Mammary epithelial cell (primary cell): ENCODE measurements at regions of chr2 and their contacts with region 1.

Region 1: GRCh38 chr2:29834624-29835023 is 86.8 kb downstream of the ALK start:
- DNase-seq: peak; percentile 38
- H3K4me3 ChIP-seq: no peak overlapping the region
- H3K27ac ChIP-seq: no peak overlapping the region
- H3K4me1 ChIP-seq: no peaks in the 10 kb centered on the region
- H3K27me3 ChIP-seq: peaks cover 4% of the 10 kb centered on the region
- CTCF ChIP-seq: no peak

Region 2: GRCh38 chr2:29309090-29310029 is 525.3 kb before region 1 on chr2:
- CTCF ChIA-PET with region 1: no interaction called
- dilution Hi-C with region 1: no loop called
- in situ Hi-C with region 1: loop called (anchors 10 to 25 kb)
- intact Hi-C with region 1: no loop called
- DNase-seq: peak; percentile 47
- H3K4me3 ChIP-seq: no peak overlapping the region
- H3K27ac ChIP-seq: no peak overlapping the region
- H3K4me1 ChIP-seq: no peaks in the 10 kb centered on the region
- H3K27me3 ChIP-seq: peaks cover 2% of the 10 kb centered on the region
- CTCF ChIP-seq: peak; percentile 89

Region 3: GRCh38 chr2:29783694-29784093 is 50.9 kb before region 1 on chr2:
- CTCF ChIA-PET with region 1: no interaction called
- dilution Hi-C with region 1: loop called (anchors 5 kb)
- in situ Hi-C with region 1: no loop called
- intact Hi-C with region 1: no loop called
- DNase-seq: no peak
- H3K4me3 ChIP-seq: no peak overlapping the region
- H3K27ac ChIP-seq: no peak overlapping the region
- H3K4me1 ChIP-seq: no peaks in the 10 kb centered on the region
- H3K27me3 ChIP-seq: no peaks in the 10 kb centered on the region
- CTCF ChIP-seq: no peak

Region 4: DNA sequence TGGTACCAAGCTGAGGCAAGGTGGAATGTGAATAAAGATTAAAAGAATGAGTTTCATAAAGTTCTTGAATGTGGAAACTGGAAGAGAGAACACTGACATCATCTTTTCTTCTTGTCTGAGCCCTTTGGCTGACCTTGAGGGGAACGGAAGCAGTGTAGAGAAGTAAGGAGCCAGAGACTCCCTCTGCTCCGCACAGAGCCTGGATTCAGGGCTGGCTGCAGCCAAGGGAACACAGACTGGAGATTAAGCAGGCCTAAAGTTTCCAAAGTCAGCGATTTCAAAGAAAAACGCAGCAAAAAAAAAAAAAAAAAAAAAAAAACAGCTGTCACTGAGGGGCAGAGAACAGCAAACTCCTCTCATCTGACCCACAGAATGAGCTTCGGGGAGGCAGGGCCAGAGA is 106.1 kb after region 1 on chr2:
- CTCF ChIA-PET with region 1: interaction called, 16 read pairs
- dilution Hi-C with region 1: no loop called
- in situ Hi-C with region 1: no loop called
- intact Hi-C with region 1: no loop called
- DNase-seq: no peak
- H3K4me3 ChIP-seq: no peak overlapping the region
- H3K27ac ChIP-seq: no peak overlapping the region
- H3K4me1 ChIP-seq: no peaks in the 10 kb centered on the region
- H3K27me3 ChIP-seq: no peaks in the 10 kb centered on the region
- CTCF ChIP-seq: no peak